ENCODE measurements at regions of chr2 and their contacts with region 1.

Region 1: DNA sequence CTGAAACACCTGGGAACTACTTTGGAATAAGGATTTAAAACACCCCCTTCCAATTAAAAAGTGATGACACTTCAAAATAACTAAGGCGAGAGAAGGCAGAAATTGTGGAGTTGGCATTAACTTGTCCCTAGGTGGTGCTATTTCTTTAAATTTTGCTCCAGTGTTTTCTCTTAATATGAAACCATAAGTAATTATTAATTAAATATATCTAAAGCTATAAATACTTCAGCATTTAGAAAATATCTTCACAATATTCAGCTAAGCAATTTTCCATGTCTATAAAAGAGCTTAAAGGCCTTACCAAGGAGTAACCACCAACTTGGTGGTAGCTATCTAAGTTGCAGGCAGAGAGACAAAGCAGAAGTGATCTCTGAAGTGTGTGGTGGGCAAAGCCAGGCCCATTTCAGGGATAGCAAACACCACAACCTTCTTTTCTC is 186.8 kb upstream of the PGAP1 start:
- DNase-seq: peak; percentile 68
- ATAC-seq: peak; percentile 71
- H3K4me3 ChIP-seq: no peak overlapping the region
- H3K4me3 Mint-ChIP-seq: no peak overlapping the region
- H3K27ac ChIP-seq: peak overlapping the region in 1 of 2 donors; percentile 44
- H3K27ac Mint-ChIP-seq: peak overlapping the region; percentile 76
- H3K4me1 ChIP-seq: peaks cover 26 to 31% of the 10 kb centered on the region in 2 donors
- H3K4me1 Mint-ChIP-seq: peaks cover 33% of the 10 kb centered on the region
- H3K27me3 ChIP-seq: no peaks in the 10 kb centered on the region
- H3K27me3 Mint-ChIP-seq: no peaks in the 10 kb centered on the region
- CTCF ChIP-seq: peak; percentile 87

Region 2: GRCh38 chr2:197011799-197012641 is 101.3 kb before region 1 on chr2:
- CTCF ChIA-PET with region 1: interaction called, 10 read pairs
- POLR2A ChIA-PET with region 1: no interaction called
- intact Hi-C with region 1: no loop called
- DNase-seq: peak; percentile 55
- ATAC-seq: peak; percentile 54
- H3K4me3 ChIP-seq: no peak overlapping the region
- H3K4me3 Mint-ChIP-seq: no peak overlapping the region
- H3K27ac ChIP-seq: peak overlapping the region in 1 of 2 donors; percentile 51
- H3K27ac Mint-ChIP-seq: peak overlapping the region; percentile 50
- H3K4me1 ChIP-seq: no peaks in the 10 kb centered on the region
- H3K4me1 Mint-ChIP-seq: no peaks in the 10 kb centered on the region
- H3K27me3 ChIP-seq: no peaks in the 10 kb centered on the region
- H3K27me3 Mint-ChIP-seq: no peaks in the 10 kb centered on the region
- CTCF ChIP-seq: peak; percentile 83

Region 3: GRCh38 chr2:197145471-197146138 is 32.3 kb after region 1 on chr2:
- CTCF ChIA-PET with region 1: interaction called, 44 read pairs
- POLR2A ChIA-PET with region 1: interaction called, 3 read pairs
- intact Hi-C with region 1: loop called (anchors 1 kb)
- DNase-seq: peak; percentile 93
- ATAC-seq: peak; percentile 88
- H3K4me3 ChIP-seq: no peak overlapping the region
- H3K4me3 Mint-ChIP-seq: peak overlapping the region; percentile 76
- H3K27ac ChIP-seq: peak overlapping the region; percentile 93 to 98
- H3K27ac Mint-ChIP-seq: peak overlapping the region; percentile 99
- H3K4me1 ChIP-seq: peaks cover 87 to 88% of the 10 kb centered on the region in 2 donors
- H3K4me1 Mint-ChIP-seq: peaks cover 82% of the 10 kb centered on the region
- H3K27me3 ChIP-seq: no peaks in the 10 kb centered on the region
- H3K27me3 Mint-ChIP-seq: no peaks in the 10 kb centered on the region
- CTCF ChIP-seq: no peak

Region 4: DNA sequence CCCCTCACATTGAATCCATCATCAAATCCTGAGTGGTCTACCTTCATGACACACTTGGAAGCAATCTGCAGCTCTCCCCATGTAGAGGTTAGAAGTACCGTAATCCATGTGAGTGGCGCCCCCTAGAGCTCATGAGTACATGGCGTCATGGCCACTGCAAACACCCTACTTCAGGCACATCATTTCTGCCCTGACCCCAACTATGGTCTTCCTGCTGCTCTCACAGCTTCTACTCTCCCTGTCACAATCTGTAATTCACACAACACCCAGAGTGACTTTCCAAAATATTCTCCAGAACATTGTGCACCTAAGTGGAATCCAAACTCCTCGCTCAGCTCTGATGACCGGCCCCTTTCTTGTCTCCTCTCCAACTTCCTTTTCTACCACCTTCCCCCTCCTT is 55.4 kb after region 1 on chr2:
- CTCF ChIA-PET with region 1: interaction called, 328 read pairs
- POLR2A ChIA-PET with region 1: interaction called, 3 read pairs
- intact Hi-C with region 1: loop called (anchors 1 kb)
- DNase-seq: peak; percentile 82
- ATAC-seq: peak; percentile 76
- H3K4me3 ChIP-seq: no peak overlapping the region
- H3K4me3 Mint-ChIP-seq: peak overlapping the region; percentile 4
- H3K27ac ChIP-seq: peak overlapping the region; percentile 2 to 60
- H3K27ac Mint-ChIP-seq: peak overlapping the region; percentile 64
- H3K4me1 ChIP-seq: peaks cover 61 to 64% of the 10 kb centered on the region in 2 donors
- H3K4me1 Mint-ChIP-seq: peaks cover 78% of the 10 kb centered on the region
- H3K27me3 ChIP-seq: no peaks in the 10 kb centered on the region
- H3K27me3 Mint-ChIP-seq: no peaks in the 10 kb centered on the region
- CTCF ChIP-seq: peak; percentile 79

Region 5: GRCh38 chr2:197191177-197191939 is 78.1 kb after region 1 on chr2:
- CTCF ChIA-PET with region 1: interaction called, 86 read pairs
- POLR2A ChIA-PET with region 1: interaction called, 4 read pairs
- intact Hi-C with region 1: loop called (anchors 1 kb)
- DNase-seq: peak; percentile 83
- ATAC-seq: peak; percentile 75
- H3K4me3 ChIP-seq: no peak overlapping the region
- H3K4me3 Mint-ChIP-seq: peak overlapping the region; percentile 2
- H3K27ac ChIP-seq: peak overlapping the region; percentile 27 to 62
- H3K27ac Mint-ChIP-seq: peak overlapping the region; percentile 80
- H3K4me1 ChIP-seq: peaks cover 47 to 53% of the 10 kb centered on the region in 2 donors
- H3K4me1 Mint-ChIP-seq: peaks cover 78% of the 10 kb centered on the region
- H3K27me3 ChIP-seq: no peaks in the 10 kb centered on the region
- H3K27me3 Mint-ChIP-seq: no peaks in the 10 kb centered on the region
- CTCF ChIP-seq: peak; percentile 85

Region 6: GRCh38 chr2:197255543-197255942 is 142.2 kb after region 1 on chr2:
- CTCF ChIA-PET with region 1: interaction called, 12 read pairs
- POLR2A ChIA-PET with region 1: no interaction called
- intact Hi-C with region 1: no loop called
- DNase-seq: peak; percentile 91
- ATAC-seq: peak; percentile 97
- H3K4me3 ChIP-seq: peak overlapping the region; percentile 18 to 84 (median 49)
- H3K4me3 Mint-ChIP-seq: peak overlapping the region; percentile 87
- H3K27ac ChIP-seq: peak overlapping the region; percentile 90 to 93
- H3K27ac Mint-ChIP-seq: peak overlapping the region; percentile 90
- H3K4me1 ChIP-seq: peaks cover 69 to 74% of the 10 kb centered on the region in 2 donors
- H3K4me1 Mint-ChIP-seq: peaks cover 74% of the 10 kb centered on the region
- H3K27me3 ChIP-seq: no peaks in the 10 kb centered on the region
- H3K27me3 Mint-ChIP-seq: no peaks in the 10 kb centered on the region
- CTCF ChIP-seq: no peak

Region 7: DNA sequence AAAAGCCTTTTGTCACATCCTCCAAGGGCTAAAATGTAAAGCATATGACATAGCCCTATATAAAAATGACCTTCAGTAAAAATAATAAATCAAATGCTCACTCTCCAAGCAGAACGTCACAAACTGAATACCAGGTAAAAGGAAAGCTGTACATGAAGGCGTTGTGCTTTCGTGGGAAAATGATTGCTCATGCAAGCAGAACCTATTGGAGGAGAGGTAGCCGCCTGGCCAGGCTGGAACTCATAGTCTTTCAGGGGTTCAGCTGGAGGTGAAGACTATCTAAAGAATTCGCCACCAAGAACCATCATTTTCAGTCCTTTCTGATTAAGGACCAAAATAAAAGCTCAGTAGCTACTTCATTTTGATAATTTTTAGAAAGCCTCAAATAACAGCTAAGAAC is 152.6 kb after region 1 on chr2:
- CTCF ChIA-PET with region 1: no interaction called
- POLR2A ChIA-PET with region 1: no interaction called
- intact Hi-C with region 1: no loop called
- DNase-seq: no peak
- ATAC-seq: no peak
- H3K4me3 ChIP-seq: no peak overlapping the region
- H3K4me3 Mint-ChIP-seq: peak overlapping the region; percentile 6
- H3K27ac ChIP-seq: peak overlapping the region; percentile 9 to 89
- H3K27ac Mint-ChIP-seq: peak overlapping the region; percentile 46
- H3K4me1 ChIP-seq: peaks cover 89 to 95% of the 10 kb centered on the region in 2 donors
- H3K4me1 Mint-ChIP-seq: peaks cover 92% of the 10 kb centered on the region
- H3K27me3 ChIP-seq: no peaks in the 10 kb centered on the region
- H3K27me3 Mint-ChIP-seq: no peaks in the 10 kb centered on the region
- CTCF ChIP-seq: no peak

Region 8: DNA sequence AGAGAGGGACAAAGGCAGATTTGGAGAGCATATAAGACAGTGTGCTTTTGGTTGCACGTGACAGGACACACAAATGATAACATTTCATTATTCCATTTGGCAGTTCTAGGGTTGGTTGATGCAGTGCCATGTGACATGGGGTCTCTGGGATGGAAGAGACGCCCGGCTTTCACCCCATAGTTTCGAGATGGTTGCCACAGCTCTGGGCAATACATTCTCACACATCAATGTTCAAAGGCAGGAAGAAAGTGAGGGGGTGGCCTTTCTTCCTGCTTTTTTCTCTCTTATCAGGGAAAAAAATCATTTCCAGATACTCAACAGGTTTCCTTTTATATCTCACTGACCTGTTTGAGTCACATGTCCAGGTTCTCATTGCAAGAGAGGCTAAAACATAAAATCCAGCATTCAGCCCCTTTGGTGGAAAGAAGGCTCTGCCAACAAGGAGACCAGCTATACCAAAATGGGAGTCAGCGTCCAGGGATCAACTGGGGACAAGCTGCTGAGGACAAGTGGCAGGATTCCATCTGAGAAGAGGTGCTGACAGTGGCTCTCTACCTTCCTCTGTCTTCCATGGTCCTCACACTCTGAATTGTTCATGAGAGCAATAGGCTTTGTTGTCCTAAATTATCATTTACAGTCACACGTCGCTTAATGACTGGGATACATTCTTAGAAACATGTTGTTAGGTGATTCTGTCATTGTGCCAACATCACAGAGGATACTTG is 226.4 kb after region 1 on chr2:
- CTCF ChIA-PET with region 1: no interaction called
- POLR2A ChIA-PET with region 1: no interaction called
- intact Hi-C with region 1: no loop called
- DNase-seq: no peak
- ATAC-seq: no peak
- H3K4me3 ChIP-seq: no peak overlapping the region
- H3K4me3 Mint-ChIP-seq: no peak overlapping the region
- H3K27ac ChIP-seq: no peak overlapping the region
- H3K27ac Mint-ChIP-seq: no peak overlapping the region
- H3K4me1 ChIP-seq: no peaks in the 10 kb centered on the region
- H3K4me1 Mint-ChIP-seq: no peaks in the 10 kb centered on the region
- H3K27me3 ChIP-seq: no peaks in the 10 kb centered on the region
- H3K27me3 Mint-ChIP-seq: peaks cover 4% of the 10 kb centered on the region
- CTCF ChIP-seq: no peak

Region 9: DNA sequence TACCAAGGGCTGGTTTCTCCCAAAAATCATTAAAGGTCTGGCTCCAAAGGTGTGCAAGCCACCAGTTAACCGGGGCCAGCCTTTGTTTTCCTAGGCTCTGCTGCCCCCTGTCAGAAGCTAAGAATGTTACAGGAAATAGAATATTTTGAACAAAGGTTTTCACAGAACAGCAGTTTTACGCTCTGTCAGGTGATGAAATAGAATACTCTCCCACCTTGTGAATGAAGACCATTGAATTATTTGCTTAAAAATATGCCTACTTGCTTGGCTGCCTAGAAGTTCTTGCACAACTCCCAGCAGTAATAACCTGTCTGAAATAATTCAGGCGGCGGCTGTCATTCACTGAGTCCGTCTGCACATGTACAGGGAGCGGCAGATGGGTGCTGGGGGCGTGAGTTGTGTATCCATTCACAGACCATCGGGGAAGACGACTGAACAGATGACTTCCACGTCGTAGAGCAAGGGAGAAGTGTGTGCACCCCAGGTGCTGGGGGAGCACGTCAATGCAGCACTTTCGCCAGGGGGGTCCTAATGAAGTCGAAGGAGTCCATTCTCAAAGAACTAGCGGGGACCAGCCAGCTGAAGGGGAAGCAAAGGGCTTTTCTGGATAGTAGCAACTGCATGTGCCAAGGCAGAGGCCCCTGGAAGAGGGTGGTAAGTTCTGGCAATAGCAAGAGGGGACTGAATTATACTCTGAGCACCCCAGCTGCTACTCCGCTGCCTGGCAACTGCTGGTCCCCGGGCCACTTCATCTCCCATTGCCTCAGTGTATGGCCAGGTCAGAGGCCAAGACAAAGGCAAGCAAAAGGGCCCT is 265.4 kb after region 1 on chr2:
- CTCF ChIA-PET with region 1: interaction called, 58 read pairs
- POLR2A ChIA-PET with region 1: interaction called, 4 read pairs
- intact Hi-C with region 1: loop called (anchors 1 kb)
- DNase-seq: peak; percentile 73
- ATAC-seq: peak; percentile 58
- H3K4me3 ChIP-seq: no peak overlapping the region
- H3K4me3 Mint-ChIP-seq: peak overlapping the region; percentile 21
- H3K27ac ChIP-seq: no peak overlapping the region
- H3K27ac Mint-ChIP-seq: no peak overlapping the region
- H3K4me1 ChIP-seq: peaks cover 0 to 6% of the 10 kb centered on the region in 2 donors
- H3K4me1 Mint-ChIP-seq: peaks cover 17% of the 10 kb centered on the region
- H3K27me3 ChIP-seq: peaks cover 0 to 3% (median 0%) of the 10 kb centered on the region in 4 experiments
- H3K27me3 Mint-ChIP-seq: no peaks in the 10 kb centered on the region
- CTCF ChIP-seq: peak; percentile 85